ENCODE measurements at regions of chr9 and their contacts with region 1.

Region 1: DNA sequence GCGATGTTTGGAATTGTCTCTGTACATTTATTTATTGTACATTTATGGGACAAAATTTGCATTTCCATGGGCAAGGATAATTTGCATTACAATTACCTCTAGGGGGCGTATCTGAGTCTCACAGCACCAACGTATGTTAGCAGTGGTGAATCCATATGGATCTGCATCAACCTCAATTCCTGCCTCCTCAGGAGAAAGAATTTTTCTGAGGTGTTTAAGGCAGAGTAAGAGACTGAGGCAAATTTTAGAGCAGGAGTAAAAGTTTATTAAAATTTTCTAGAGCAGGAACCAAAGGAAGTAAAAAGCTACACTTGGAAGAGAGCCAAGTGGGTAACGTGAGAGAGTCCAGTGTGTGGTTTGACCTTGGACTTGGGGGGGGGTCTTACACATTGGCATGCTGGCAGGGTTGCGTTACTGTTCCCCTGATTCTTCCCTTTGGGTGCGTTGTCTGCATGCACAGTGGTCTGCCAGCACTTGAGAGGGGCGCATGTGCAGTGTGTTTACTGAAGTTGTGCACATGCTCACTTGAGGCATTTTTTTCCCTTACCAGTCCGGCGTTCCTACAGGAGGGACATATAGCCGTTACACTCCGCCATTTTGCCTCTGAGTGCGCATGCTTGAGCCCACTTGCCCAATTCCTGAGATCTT is 21.0 kb upstream of the RAB14 start:
- H3K4me3 Mint-ChIP-seq: no peak overlapping the region
- H3K27ac Mint-ChIP-seq: no peak overlapping the region
- H3K4me1 Mint-ChIP-seq: peaks cover 45% of the 10 kb centered on the region
- H3K27me3 Mint-ChIP-seq: no peaks in the 10 kb centered on the region

Region 2: DNA sequence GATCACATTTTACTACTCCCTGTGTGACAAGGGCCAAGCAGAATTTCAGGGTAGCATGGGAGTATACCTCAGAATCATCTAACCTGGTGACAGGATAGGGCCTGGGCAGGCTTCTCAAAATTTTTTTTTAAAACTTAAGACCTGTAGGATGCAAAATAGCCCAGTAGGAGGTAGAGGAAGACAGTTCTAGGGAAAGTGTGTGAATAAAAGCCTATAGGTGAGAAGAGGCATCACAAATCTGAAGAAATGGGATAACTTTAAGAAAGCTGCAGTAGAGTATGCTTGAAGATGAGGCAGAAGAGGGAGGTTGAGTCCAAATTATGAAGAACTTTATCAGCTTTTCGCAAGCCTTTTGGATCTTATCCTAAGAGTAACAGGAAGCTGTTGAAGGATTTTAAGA is 115.6 kb before region 1 on chr9:
- intact Hi-C with region 1: no loop called
- H3K4me3 Mint-ChIP-seq: no peak overlapping the region
- H3K27ac Mint-ChIP-seq: no peak overlapping the region
- H3K4me1 Mint-ChIP-seq: peaks cover 29% of the 10 kb centered on the region
- H3K27me3 Mint-ChIP-seq: no peaks in the 10 kb centered on the region

Region 3: GRCh38 chr9:121267689-121268597 is 45.3 kb after region 1 on chr9 and contains the start of gene GSN:
- intact Hi-C with region 1: loop called (anchors 5 kb)
- H3K4me3 Mint-ChIP-seq: peak within 1 kb of the TSS; percentile 97
- H3K27ac Mint-ChIP-seq: peak within 1 kb of the TSS; percentile 94
- H3K4me1 Mint-ChIP-seq: peaks cover 78% of the 10 kb centered on the region
- H3K27me3 Mint-ChIP-seq: no peaks in the 10 kb centered on the region

Region 4: DNA sequence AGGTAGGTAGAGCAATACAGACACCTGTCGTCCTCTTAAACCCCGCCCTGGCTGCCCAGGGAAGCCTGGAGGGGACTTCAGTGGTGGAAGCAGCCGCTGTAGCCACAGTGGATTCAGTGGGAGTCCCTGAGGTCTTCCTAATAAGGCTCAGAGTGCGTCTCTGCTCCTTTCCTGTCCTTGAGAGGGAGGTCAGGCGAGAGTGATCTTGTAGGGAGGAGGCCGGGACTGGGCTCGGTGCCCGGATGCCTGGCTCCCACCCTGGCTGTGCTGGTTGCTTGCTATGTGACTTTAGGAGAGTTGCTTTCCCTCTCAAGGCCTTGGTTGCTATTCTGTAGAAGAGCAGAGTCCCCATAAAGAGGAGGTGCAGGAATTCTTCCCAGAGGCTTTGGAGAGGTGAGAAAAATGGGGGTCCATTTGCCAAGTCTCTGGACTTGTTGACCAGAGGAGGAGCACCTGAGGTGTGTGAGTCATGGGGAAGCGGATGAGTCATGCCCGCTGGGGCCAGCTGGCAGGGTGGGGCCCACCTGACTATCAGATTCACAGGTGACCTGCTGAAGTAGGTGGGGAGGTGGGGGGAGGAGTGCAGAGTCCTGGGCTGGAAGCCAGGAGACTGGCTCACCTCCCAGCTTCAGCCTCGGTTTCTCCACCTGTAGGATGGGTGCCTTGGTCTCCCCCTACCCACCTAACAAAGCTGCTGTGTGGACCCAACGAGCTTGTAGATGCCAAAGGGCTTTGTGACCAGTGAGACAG is 59.1 kb after region 1 on chr9:
- intact Hi-C with region 1: loop called (anchors 5 kb)
- H3K4me3 Mint-ChIP-seq: peak overlapping the region; percentile 61
- H3K27ac Mint-ChIP-seq: peak overlapping the region; percentile 98
- H3K4me1 Mint-ChIP-seq: peaks cover 95% of the 10 kb centered on the region
- H3K27me3 Mint-ChIP-seq: no peaks in the 10 kb centered on the region